ENCODE measurements at regions of chr5 and their contacts with region 1.

Region 1: GRCh38 chr5:159262859-159263567 is at the start of gene UBLCP1:
- DNase-seq: peak; percentile 89
- ATAC-seq: peak; percentile 93
- total RNA-seq, gene UBLCP1: 14.6 TPM

Region 2: DNA sequence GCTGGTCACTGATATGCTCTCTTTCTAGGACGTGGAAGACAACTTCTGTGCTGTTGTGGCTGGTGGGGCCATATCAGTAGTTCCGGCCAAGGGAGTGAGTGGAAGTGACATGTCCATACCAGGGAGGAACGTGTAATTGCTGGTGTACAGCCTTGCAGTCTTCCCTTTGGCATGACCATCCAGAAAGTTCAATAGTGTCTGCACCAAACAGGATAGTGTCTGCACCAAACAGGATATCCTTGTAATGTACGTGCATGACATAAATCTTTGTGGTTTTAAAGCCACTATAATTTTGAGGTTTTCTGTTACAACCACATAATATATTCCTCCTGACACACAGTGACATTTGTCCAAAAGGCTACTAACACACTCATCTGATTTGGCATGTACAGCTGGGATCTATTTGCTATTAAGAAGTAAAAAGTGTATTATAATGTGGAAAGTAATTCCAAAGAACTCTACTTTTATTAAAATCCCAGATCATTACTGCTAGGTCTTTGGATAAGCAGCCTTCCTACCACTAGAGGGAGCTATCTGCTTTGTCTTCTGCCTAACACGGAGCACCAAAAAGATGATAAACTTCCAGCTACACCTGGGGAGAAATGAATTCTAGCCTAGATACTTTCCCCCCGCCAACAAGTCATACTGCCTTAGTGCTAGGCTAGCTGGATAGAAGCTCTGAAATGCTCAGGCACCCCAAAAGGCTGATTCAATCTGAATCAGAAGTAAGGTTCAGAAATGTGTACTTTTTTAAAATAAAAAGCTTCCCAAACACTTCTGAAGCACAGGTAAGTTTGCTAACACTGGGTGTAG is 106.4 kb before region 1 on chr5:
- intact Hi-C with region 1: loop called (anchors 1 kb)
- DNase-seq: no peak
- ATAC-seq: peak; percentile 72

Region 3: DNA sequence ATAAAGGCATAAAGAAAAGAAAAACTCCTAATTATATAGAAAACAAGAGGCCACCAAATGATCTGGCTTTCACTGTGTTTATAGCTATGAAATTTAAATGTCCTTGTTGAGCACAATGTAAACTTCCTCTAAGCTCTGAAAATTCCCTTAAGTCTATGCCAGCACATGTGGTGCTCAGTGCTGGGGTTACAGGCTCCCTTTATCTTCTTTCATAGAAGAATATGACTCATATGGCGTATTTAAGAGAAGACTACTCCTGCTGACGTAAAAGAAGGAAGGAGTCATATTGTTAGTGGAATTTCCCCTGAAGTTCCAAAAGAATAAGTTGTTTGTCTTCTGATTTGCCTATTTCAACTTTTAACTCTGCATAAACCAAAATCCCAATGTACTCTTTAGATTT is 84.0 kb before region 1 on chr5:
- intact Hi-C with region 1: loop called (anchors 5 kb)
- DNase-seq: no peak
- ATAC-seq: peak; percentile 73

Region 4: GRCh38 chr5:159209438-159210305 is 53.3 kb before region 1 on chr5 and contains the start of gene RNF145:
- intact Hi-C with region 1: loop called (anchors 2 kb)
- DNase-seq: peak; percentile 95
- ATAC-seq: peak; percentile 82
- total RNA-seq, gene RNF145: 21.9 TPM

Region 5: GRCh38 chr5:159864885-159865691 is 602.1 kb after region 1 on chr5:
- intact Hi-C with region 1: no loop called
- DNase-seq: no peak
- ATAC-seq: peak; percentile 43